Activated CD8-positive, alpha-beta T cell treated with anti-CD3 and anti-CD28 coated beads for 36 hours (primary cell): ENCODE measurements at regions of chr11 and their contacts with region 1.

Region 1: DNA sequence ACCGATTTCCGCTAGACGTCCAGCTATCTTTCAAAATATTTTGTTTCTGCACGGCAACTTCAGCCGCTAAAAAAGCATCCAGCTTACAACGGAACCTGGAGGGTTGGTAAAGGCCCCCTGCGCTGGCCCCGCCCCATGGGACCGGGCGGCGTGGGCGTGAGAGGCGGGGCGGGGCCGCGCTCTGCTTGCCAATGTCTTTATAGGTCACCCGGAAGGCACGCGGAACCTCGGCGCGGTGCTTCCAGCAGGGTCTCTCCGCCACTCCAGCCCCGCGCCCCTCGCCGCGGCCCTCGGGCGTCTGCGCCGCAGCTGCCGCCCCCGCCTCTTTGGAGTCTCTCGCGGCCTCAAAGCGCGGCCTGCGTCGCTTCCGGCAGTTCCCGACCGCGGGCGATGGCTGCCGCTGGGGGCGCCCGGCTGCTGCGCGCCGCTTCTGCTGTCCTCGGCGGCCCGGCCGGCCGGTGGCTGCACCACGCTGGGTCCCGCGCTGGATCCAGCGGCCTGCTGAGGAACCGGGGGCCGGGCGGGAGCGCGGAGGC is at the start of gene FDX1:
- DNase-seq: peak; percentile 93
- ATAC-seq: peak; percentile 88
- H3K4me3 Mint-ChIP-seq: peak within 1 kb of the TSS; percentile 100
- H3K27ac Mint-ChIP-seq: peak within 1 kb of the TSS; percentile 96
- H3K4me1 Mint-ChIP-seq: peaks cover 39% of the 10 kb centered on the region
- H3K27me3 Mint-ChIP-seq: no peaks in the 10 kb centered on the region
- CTCF ChIP-seq: peak; percentile 47
- total RNA-seq, gene FDX1: 16.9 to 17.2 TPM

Region 2: GRCh38 chr11:110296226-110297075 is 133.3 kb before region 1 on chr11 and contains the start of gene RDX:
- CTCF ChIA-PET with region 1: interaction called, 7 read pairs
- POLR2A ChIA-PET with region 1: interaction called, 3 read pairs
- intact Hi-C with region 1: loop called (anchors 5 kb)
- DNase-seq: peak; percentile 55
- ATAC-seq: peak; percentile 72
- H3K4me3 Mint-ChIP-seq: peak within 1 kb of the TSS; percentile 82
- H3K27ac Mint-ChIP-seq: peak within 1 kb of the TSS; percentile 87
- H3K4me1 Mint-ChIP-seq: peaks cover 37% of the 10 kb centered on the region
- H3K27me3 Mint-ChIP-seq: no peaks in the 10 kb centered on the region
- CTCF ChIP-seq: no peak
- total RNA-seq, gene RDX: 37.8 to 41.2 TPM

Region 3: DNA sequence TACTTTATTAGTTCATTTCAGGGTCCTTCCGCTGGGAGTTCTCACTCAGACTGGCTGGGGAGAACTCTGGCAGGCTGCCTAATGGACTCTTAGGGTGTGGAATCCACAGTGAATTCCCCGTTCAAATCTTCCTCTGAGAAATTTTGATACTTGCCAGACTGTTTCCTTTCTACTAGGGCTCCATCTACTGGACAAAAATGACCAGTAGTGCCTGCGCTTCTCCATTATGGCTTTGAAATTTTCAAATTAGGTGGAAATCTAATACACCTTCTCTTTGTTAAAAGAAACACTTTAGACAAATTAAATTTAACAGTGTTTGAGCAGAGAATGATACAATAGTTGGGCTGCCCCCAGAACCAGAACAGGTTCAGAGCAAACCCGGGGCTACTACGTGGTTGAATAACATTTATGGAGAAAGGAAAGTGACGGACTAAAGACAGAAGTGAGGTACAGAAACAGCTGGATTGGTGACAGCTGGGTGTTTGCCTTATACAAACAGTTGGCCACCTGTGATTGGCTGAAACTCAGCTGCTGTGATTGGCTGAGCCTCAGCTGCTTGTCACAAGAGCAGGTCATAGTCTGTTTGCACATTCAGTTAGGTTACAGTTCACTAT is 53.0 kb before region 1 on chr11:
- CTCF ChIA-PET with region 1: interaction called, 28 read pairs
- POLR2A ChIA-PET with region 1: no interaction called
- intact Hi-C with region 1: loop called (anchors 5 kb)
- DNase-seq: peak; percentile 38
- ATAC-seq: peak; percentile 29
- H3K4me3 Mint-ChIP-seq: no peak overlapping the region
- H3K27ac Mint-ChIP-seq: no peak overlapping the region
- H3K4me1 Mint-ChIP-seq: peaks cover 16% of the 10 kb centered on the region
- H3K27me3 Mint-ChIP-seq: peaks cover 7% of the 10 kb centered on the region
- CTCF ChIP-seq: peak; percentile 90

Region 4: GRCh38 chr11:110409174-110409573 is 20.6 kb before region 1 on chr11:
- CTCF ChIA-PET with region 1: interaction called, 9 read pairs
- POLR2A ChIA-PET with region 1: interaction called, 3 read pairs
- intact Hi-C with region 1: loop called (anchors 1 kb)
- DNase-seq: no peak
- ATAC-seq: no peak
- H3K4me3 Mint-ChIP-seq: no peak overlapping the region
- H3K27ac Mint-ChIP-seq: no peak overlapping the region
- H3K4me1 Mint-ChIP-seq: no peaks in the 10 kb centered on the region
- H3K27me3 Mint-ChIP-seq: no peaks in the 10 kb centered on the region
- CTCF ChIP-seq: no peak

Region 5: GRCh38 chr11:110447897-110448745 is 18.3 kb after region 1 on chr11:
- CTCF ChIA-PET with region 1: interaction called, 57 read pairs
- POLR2A ChIA-PET with region 1: no interaction called
- intact Hi-C with region 1: no loop called
- DNase-seq: no peak
- ATAC-seq: peak; percentile 47
- H3K4me3 Mint-ChIP-seq: no peak overlapping the region
- H3K27ac Mint-ChIP-seq: no peak overlapping the region
- H3K4me1 Mint-ChIP-seq: peaks cover 27% of the 10 kb centered on the region
- H3K27me3 Mint-ChIP-seq: no peaks in the 10 kb centered on the region
- CTCF ChIP-seq: no peak

Region 6: GRCh38 chr11:110472858-110473257 is 43.1 kb after region 1 on chr11:
- CTCF ChIA-PET with region 1: no interaction called
- POLR2A ChIA-PET with region 1: no interaction called
- intact Hi-C with region 1: no loop called
- DNase-seq: no peak
- ATAC-seq: no peak
- H3K4me3 Mint-ChIP-seq: no peak overlapping the region
- H3K27ac Mint-ChIP-seq: no peak overlapping the region
- H3K4me1 Mint-ChIP-seq: peaks cover 2% of the 10 kb centered on the region
- H3K27me3 Mint-ChIP-seq: no peaks in the 10 kb centered on the region
- CTCF ChIP-seq: no peak